Motor neuron (in vitro differentiated cells): ENCODE measurements at regions of chr15 and their contacts with region 1.

Region 1: GRCh38 chr15:65192016-65192415 is 6.9 kb upstream of the CLPX start:
- ATAC-seq: peak in 2 of 8 experiments; percentile 27 to 36
- H3K4me3 ChIP-seq: no peak overlapping the region
- H3K27ac ChIP-seq: no peak overlapping the region
- H3K4me1 ChIP-seq: peaks cover 0 to 5% of the 10 kb centered on the region in 2 donors

Region 2: DNA sequence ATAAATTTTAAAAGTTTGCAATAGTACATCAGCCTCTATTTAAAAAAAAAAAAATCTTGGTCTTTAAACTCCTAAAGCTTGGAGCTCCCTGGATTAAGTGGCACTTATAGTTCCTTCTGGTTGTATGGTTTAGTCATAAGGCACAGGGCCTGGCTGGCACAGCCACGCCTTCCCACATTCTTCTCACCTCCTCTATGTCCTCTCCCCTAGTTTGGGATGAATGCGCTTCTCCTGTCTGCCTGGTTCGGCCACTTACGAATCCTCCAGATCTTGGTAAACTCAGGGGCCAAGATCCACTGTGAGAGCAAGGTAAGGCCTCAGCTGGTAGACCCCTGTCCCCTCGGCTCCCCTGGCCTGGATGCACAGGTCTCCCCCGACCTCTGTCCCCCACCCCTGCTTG is 270.3 kb before region 1 on chr15:
- in situ Hi-C with region 1: no loop called
- ATAC-seq: no peak
- H3K4me3 ChIP-seq: no peak overlapping the region
- H3K27ac ChIP-seq: no peak overlapping the region
- H3K4me1 ChIP-seq: no peaks in the 10 kb centered on the region

Region 3: GRCh38 chr15:65264863-65265430 is 72.9 kb after region 1 on chr15:
- in situ Hi-C with region 1: loop called in 3 of 9 experiments (anchors 10 kb)
- ATAC-seq: peak in 1 of 8 experiments; percentile 35
- H3K4me3 ChIP-seq: no peak overlapping the region
- H3K27ac ChIP-seq: no peak overlapping the region
- H3K4me1 ChIP-seq: no peaks in the 10 kb centered on the region

Region 4: GRCh38 chr15:65275728-65276126 is 83.7 kb after region 1 on chr15:
- in situ Hi-C with region 1: loop called in 6 of 9 experiments (anchors 10 to 25 kb)
- ATAC-seq: peak in 3 of 8 experiments; percentile 26 to 60 (median 45)
- H3K4me3 ChIP-seq: no peak overlapping the region
- H3K27ac ChIP-seq: no peak overlapping the region
- H3K4me1 ChIP-seq: no peaks in the 10 kb centered on the region

Region 5: DNA sequence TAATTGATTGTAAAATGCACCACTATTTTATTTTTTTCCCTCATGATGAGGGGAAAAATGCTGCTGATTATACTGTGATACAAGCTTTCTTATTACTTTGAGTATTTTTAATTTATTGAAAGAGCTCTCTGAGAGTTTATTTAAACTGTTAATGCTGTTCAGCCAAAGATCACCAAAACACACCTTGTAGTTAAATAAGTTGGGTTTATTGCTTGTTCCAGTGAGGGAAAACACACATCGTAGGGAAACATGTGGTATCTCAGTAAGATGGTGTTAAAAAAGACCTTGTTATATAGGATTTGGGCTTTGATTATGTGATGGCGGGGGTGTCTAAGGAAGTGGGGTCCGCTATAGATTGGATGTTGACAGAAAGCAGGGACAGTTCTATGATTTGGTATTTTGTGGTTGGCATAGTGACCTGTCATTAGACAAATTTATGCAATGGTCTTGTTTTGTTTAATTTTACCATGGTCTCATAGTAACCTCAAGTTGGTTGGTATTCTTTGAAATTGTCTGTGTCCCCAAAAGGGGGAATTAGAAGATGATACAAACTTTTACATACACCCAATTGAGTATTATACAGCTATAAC is 349.3 kb after region 1 on chr15:
- in situ Hi-C with region 1: no loop called
- ATAC-seq: no peak
- H3K4me3 ChIP-seq: no peak overlapping the region
- H3K27ac ChIP-seq: no peak overlapping the region
- H3K4me1 ChIP-seq: no peaks in the 10 kb centered on the region